Activated CD4-positive, alpha-beta T cell treated with anti-CD3 and anti-CD28 coated beads, Interleukin-2, amount 10 ng/mL, durations not matched to agents 24 days and 14 days (primary cell): ENCODE measurements at regions of chr13 and their contacts with region 1.

Region 1: DNA sequence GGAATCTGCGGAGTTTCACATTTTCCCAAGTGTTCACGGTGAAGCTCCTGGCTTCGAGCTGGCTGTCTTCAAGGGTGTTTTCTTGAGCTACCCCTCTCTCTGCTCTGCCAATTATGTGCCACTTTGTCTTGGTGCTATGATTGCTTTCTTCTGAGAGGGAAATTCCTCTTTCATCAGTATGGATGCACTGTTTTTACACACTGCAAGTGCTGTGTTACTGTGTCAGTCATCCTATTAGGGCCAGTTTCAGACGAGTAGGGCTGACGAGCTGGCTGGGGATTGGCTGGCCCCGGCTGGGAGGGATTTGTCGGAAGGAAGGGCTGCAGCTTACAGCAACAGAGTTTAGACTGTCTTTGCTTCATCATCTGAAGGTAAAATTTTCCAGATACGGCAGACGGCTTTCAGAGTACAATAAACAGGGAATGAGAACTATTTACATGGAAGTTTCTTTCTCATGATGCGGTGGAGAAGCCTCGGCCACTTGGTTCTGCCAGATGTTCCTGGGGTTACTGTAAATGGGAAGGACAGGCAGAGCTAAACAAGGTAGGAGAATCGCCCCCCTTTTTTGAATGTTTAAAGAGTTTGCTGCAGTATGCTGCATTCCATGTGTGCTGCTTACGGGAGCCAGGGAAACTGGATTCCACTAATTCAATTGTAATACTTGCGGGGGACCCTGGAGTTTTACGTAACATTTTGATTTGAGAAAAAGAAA is at the start of gene MBNL2:
- DNase-seq: peak; percentile 95
- H3K4me3 Mint-ChIP-seq: peak within 1 kb of the TSS; percentile 91
- H3K27ac Mint-ChIP-seq: peak within 1 kb of the TSS; percentile 92
- H3K4me1 Mint-ChIP-seq: peaks cover 39% of the 10 kb centered on the region
- H3K27me3 Mint-ChIP-seq: no peaks in the 10 kb centered on the region
- total RNA-seq, gene MBNL2: 22.0 and 24.5 TPM in 2 replicates

Region 2: DNA sequence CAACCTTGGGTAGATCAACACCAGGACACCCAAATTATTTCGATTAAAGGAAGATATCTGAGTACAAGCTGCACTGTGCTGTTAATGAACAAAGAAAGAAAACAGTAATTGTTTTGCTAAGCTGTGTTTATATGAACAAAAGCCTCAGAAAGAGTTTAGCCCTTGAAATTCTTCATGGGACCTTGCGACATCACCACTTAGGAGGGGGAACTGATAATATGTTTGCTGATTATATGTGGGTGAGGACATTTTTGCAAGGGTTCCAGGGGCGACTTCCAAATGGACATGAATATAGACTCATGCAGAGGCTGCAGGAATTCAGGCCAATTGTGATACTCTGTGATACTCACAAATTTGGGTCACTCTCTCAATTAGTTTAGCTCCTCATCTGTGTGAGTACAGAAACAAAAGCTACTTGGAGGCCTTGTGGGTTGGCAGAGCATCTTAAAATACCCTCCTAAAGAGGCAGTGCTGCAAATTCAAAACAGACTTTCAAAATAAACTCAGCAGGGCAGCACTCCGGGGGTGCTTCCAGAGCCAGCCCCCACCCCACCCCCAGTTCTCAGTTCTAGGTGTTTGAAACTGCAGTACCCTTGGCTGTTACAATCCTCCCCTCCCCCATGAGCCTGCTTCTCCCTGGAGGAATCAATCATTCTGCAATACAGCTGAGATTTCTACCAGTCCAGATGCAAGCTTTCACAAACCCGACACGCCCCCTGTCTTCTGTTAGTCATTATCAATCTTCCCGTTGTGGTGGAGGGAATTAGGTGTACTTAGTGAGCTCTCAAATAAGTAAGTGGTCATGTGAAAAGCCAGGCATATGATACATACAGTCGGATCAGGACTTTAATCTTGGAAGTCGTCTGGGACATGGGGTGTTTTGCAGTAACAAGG is 97.0 kb before region 1 on chr13:
- intact Hi-C with region 1: loop called (anchors 5 kb)
- DNase-seq: no peak
- H3K4me3 Mint-ChIP-seq: no peak overlapping the region
- H3K27ac Mint-ChIP-seq: no peak overlapping the region
- H3K4me1 Mint-ChIP-seq: peaks cover 15% of the 10 kb centered on the region
- H3K27me3 Mint-ChIP-seq: peaks cover 26% of the 10 kb centered on the region

Region 3: GRCh38 chr13:97289514-97290298 is 67.6 kb after region 1 on chr13:
- intact Hi-C with region 1: loop called (anchors 1 kb)
- DNase-seq: no peak
- H3K4me3 Mint-ChIP-seq: no peak overlapping the region
- H3K27ac Mint-ChIP-seq: no peak overlapping the region
- H3K4me1 Mint-ChIP-seq: peaks cover 25% of the 10 kb centered on the region
- H3K27me3 Mint-ChIP-seq: no peaks in the 10 kb centered on the region

Region 4: DNA sequence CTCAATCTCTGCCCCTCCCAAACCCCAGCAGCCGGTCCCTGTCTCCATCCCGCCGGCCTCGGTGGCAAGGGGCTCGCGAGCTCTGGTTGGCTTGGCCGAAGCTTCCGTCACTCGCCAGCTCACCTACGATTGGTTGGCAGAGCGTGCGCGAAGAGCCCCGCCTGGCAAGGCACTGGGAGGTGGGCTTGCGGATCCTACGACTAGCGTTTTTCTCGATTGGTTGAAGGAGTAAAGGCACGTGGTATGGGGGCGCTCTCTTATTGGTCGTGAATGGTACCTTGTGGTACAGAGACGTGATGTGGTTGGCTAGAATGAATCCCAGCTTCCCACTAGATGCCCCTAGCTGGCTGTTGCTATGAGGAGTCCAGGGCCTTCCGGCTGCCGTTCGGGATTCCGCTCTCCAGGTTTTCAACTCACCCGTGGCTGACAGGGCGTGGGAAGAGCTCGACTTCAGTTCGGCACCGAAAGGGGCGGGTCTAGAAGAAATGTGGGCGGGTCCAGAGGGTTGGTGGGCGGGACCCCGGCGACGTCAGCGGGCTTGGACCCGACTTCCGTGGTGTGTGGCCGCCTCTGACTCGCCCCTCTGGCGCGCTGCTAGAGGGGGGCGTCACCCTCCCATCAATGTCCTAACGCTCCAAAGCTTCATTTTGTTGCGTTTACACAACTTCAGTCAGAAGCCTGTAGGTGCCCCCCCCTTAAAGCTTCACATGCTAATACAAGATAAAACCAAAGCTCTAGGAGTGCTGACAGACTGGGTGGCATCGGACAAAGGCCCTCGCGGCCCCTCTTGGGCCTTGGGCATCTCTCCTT is 211.0 kb after region 1 on chr13:
- intact Hi-C with region 1: loop called (anchors 1 kb)
- DNase-seq: peak; percentile 100
- H3K4me3 Mint-ChIP-seq: peak overlapping the region; percentile 94
- H3K27ac Mint-ChIP-seq: peak overlapping the region; percentile 98
- H3K4me1 Mint-ChIP-seq: peaks cover 32% of the 10 kb centered on the region
- H3K27me3 Mint-ChIP-seq: peaks cover 12% of the 10 kb centered on the region